A673 (cell line): ENCODE measurements at regions of chr2 and their contacts with region 1.

Region 1: DNA sequence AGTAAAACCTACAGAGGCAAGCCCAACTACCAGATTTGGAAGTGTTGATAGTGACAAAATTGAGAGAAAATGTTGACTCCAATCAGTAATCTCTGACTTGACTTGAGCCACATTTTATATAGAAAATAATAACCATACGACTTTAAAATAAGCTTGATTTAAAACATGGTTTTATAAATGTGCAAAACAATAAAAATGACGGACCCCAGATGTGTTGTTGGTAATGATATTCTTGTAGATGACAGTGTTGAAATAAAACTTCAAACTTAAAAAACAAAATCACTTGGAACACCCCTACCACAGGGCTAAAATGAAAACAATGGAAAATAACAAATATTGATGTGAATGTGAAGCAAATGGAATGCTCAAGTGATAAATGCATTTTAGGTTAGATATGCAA is 188.1 kb downstream of the SRBD1 start:
- DNase-seq: no peak
- H3K4me3 ChIP-seq: no peak overlapping the region
- H3K27ac ChIP-seq: no peak overlapping the region
- H3K4me1 ChIP-seq: no peaks in the 10 kb centered on the region
- H3K27me3 ChIP-seq: no peaks in the 10 kb centered on the region
- CTCF ChIP-seq: no peak

Region 2: GRCh38 chr2:45156605-45157004 is 266.3 kb before region 1 on chr2:
- CTCF ChIA-PET with region 1: no interaction called
- POLR2A ChIA-PET with region 1: no interaction called
- intact Hi-C with region 1: no loop called
- DNase-seq: no peak
- H3K4me3 ChIP-seq: no peak overlapping the region
- H3K27ac ChIP-seq: no peak overlapping the region
- H3K4me1 ChIP-seq: no peaks in the 10 kb centered on the region
- H3K27me3 ChIP-seq: peaks cover 35% of the 10 kb centered on the region
- CTCF ChIP-seq: no peak

Region 3: GRCh38 chr2:45545943-45546342 is 123.0 kb after region 1 on chr2:
- CTCF ChIA-PET with region 1: no interaction called
- POLR2A ChIA-PET with region 1: interaction called, 12 read pairs
- intact Hi-C with region 1: no loop called
- DNase-seq: no peak
- H3K4me3 ChIP-seq: no peak overlapping the region
- H3K27ac ChIP-seq: no peak overlapping the region
- H3K4me1 ChIP-seq: no peaks in the 10 kb centered on the region
- H3K27me3 ChIP-seq: no peaks in the 10 kb centered on the region
- CTCF ChIP-seq: no peak

Region 4: GRCh38 chr2:45585267-45585861 is 162.4 kb after region 1 on chr2:
- CTCF ChIA-PET with region 1: no interaction called
- POLR2A ChIA-PET with region 1: no interaction called
- intact Hi-C with region 1: no loop called
- DNase-seq: peak; percentile 66
- H3K4me3 ChIP-seq: no peak overlapping the region
- H3K27ac ChIP-seq: no peak overlapping the region
- H3K4me1 ChIP-seq: peaks cover 9% of the 10 kb centered on the region
- H3K27me3 ChIP-seq: no peaks in the 10 kb centered on the region
- CTCF ChIP-seq: peak; percentile 80

Region 5: DNA sequence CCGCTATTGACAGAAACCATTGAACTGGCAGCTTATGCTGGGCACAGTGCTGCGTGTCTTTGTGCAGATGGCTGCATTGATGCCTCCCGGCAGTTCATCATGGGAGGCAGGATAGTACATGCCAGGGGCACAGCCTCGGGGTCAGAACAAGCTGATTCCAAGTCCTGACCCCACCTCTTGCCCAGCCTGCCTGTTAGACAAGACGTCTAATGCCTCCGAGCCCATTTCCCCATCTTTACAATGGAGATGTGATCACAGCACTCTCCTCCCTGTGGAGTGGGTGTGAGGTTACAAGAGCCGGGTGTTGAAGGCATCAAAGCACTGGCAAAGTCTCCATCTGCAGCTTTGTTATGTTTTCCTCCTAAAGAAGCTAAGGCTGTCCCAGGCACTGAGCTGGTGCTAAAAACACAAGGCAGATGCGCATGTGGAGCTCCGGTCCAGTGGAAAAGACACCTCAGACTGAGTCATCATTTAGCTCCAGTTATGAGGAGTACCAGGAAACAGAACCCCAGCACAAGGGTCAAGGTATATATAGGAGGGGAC is 748.6 kb after region 1 on chr2:
- CTCF ChIA-PET with region 1: no interaction called
- POLR2A ChIA-PET with region 1: no interaction called
- intact Hi-C with region 1: no loop called
- DNase-seq: no peak
- H3K4me3 ChIP-seq: no peak overlapping the region
- H3K27ac ChIP-seq: no peak overlapping the region
- H3K4me1 ChIP-seq: no peaks in the 10 kb centered on the region
- H3K27me3 ChIP-seq: no peaks in the 10 kb centered on the region
- CTCF ChIP-seq: no peak